OCI-LY7 (cell line): ENCODE measurements at regions of chr17 and their contacts with region 1.

Region 1: DNA sequence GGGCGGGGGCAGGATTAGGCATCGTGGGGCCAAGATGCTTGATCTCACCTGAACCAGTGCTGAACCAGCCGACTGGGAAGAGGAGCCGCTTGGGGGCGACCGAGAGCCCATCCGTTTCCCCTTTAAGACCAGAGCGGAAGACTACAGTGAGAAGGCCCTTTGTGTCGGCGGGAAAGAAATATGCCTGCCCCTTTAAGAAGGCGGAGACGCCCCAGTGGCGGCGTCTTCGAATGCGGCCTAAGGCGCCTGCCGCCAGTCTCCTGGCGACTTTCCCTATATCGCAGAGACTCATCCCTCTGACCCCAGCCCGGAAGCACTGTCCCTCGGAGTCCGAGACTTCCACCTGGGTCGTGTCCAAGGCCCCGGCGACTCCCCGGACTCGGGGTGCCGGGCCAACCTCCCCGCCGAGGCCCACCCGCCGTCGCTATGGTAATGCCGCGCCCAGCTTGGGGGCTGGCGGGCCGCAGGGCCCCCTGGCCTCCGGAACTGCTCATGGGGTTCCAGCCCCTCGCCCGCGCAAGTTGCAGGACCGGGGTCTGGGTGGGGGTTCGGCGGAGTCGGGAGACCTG is at the start of gene HROB:
- DNase-seq: peak; percentile 97
- H3K4me3 ChIP-seq: peak within 1 kb of the TSS; percentile 90
- H3K27ac ChIP-seq: peak within 1 kb of the TSS; percentile 63
- H3K4me1 ChIP-seq: peaks cover 27% of the 10 kb centered on the region
- CTCF ChIP-seq: peak; percentile 84
- total RNA-seq, gene HROB: 10.9 and 13.3 TPM in 2 replicates

Region 2: GRCh38 chr17:44110823-44111633 is 30.8 kb before region 1 on chr17:
- CTCF ChIA-PET with region 1: no interaction called
- POLR2A ChIA-PET with region 1: no interaction called
- intact Hi-C with region 1: no loop called
- DNase-seq: peak; percentile 62
- H3K4me3 ChIP-seq: peak overlapping the region; percentile 52
- H3K27ac ChIP-seq: peak overlapping the region; percentile 30
- H3K4me1 ChIP-seq: peaks cover 32% of the 10 kb centered on the region
- CTCF ChIP-seq: no peak

Region 3: GRCh38 chr17:44123356-44124117 is 18.3 kb before region 1 on chr17 and contains the start of gene HDAC5:
- CTCF ChIA-PET with region 1: no interaction called
- POLR2A ChIA-PET with region 1: interaction called, 3 read pairs
- intact Hi-C with region 1: loop called (anchors 1 kb)
- DNase-seq: peak; percentile 96
- H3K4me3 ChIP-seq: peak within 1 kb of the TSS; percentile 85
- H3K27ac ChIP-seq: peak within 1 kb of the TSS; percentile 62
- H3K4me1 ChIP-seq: peaks cover 25% of the 10 kb centered on the region
- CTCF ChIP-seq: peak; percentile 78
- total RNA-seq, gene HDAC5: 26.4 and 41.5 TPM in 2 replicates

Region 4: DNA sequence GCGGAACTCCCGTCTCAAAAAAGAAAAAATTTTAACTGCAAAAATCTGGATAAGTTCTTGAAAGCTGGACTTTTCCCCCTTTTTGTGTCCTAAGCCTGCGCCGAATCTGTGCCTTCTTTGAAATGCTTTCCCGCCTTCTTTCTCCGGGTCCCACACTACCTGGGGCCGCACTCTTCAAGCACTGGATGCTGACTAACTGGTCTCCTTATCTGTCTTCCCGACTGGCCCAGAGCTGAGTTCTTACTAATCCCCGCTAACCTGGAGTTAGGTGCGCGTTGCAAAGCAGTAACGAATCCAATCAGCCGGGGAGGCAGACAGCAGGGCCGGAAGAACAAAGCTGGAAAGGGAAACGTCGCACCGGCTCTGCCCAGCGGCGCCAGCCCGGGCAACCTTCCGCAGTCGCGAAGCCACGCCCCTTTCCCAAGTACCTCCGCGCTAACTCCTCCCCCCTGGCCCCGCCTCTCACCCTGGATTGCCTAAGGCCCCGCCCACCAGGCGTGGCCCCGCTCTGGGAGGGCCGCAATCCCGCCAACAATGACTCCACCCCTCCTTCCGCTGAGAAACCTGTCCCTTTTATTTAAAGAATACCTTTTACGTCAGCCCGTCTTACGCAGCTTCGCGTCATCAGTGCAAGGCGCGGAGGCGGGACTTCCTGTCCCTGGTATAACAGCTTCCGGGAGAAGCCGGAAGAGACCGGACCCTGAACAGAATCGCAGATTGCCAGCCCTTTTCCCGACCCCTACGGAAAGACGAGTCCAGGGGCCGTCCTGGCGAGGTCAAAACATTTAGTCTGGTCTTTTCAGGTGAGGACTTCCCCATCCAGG is 44.7 kb after region 1 on chr17 and contains the start of gene TMUB2:
- CTCF ChIA-PET with region 1: no interaction called
- POLR2A ChIA-PET with region 1: no interaction called
- intact Hi-C with region 1: loop called (anchors 5 kb)
- DNase-seq: peak; percentile 100
- H3K4me3 ChIP-seq: peak within 1 kb of the TSS; percentile 76
- H3K27ac ChIP-seq: peak within 1 kb of the TSS; percentile 68
- H3K4me1 ChIP-seq: peaks cover 26% of the 10 kb centered on the region
- CTCF ChIP-seq: no peak
- total RNA-seq, gene TMUB2: 16.0 and 21.3 TPM in 2 replicates

Region 5: DNA sequence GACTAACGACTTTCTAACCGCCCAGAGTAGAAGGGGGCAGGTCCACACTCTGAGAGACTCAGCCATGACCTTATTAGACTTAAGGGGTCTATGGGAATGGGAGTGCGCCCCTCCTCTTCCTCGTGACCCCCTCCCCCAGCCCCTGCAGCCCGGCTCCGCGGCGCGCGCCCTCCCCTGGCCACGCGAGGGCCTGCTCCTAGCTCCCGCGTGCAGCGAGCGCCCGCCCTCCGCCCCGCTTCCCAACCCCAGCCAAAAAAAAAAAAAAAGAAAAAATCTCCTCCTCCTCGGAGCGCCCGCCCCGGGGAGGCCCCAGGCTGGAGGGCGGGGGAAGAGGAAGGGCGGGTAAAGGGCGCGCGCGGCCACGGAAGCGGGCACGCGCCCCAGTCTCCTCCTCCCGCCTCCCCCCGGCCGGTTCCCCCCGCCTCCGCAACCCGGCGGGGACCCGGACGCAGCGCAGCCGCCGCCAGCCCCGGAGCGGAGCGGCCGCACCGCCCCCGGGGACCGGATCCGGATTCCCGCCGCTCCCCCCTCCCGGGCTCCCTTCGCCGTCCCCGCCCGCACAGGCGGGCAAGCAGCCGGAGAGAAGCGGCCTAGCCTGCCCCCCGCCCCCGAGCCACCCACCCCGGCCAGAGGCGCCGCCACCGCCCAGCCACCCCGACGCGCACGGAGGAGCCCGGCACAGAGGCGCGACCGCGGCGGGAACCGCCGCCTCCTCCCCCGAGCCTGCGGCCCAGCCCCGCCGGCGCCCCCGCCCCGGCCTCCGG is 76.7 kb after region 1 on chr17:
- CTCF ChIA-PET with region 1: no interaction called
- POLR2A ChIA-PET with region 1: no interaction called
- intact Hi-C with region 1: loop called (anchors 1 kb)
- DNase-seq: peak; percentile 94
- H3K4me3 ChIP-seq: peak overlapping the region; percentile 90
- H3K27ac ChIP-seq: peak overlapping the region; percentile 86
- H3K4me1 ChIP-seq: peaks cover 36% of the 10 kb centered on the region
- CTCF ChIP-seq: peak; percentile 80